Adrenal gland (tissue), 19 donors: ENCODE measurements at regions of chr5 and their contacts with region 1.

Region 1: GRCh38 chr5:38193015-38193581 is 65.3 kb upstream of the EGFLAM start:
- DNase-seq: peak; percentile 60 to 91 (median 74)
- H3K4me3 ChIP-seq: no peak overlapping the region
- H3K27ac ChIP-seq: no peak overlapping the region
- H3K4me1 ChIP-seq: no peaks in the 10 kb centered on the region
- H3K27me3 ChIP-seq: no peaks in the 10 kb centered on the region
- CTCF ChIP-seq: peak; percentile 84 to 93 (median 89)
- POLR2A ChIP-seq: no peak

Region 2: GRCh38 chr5:37412515-37413277 is 780.4 kb before region 1 on chr5:
- intact Hi-C with region 1: loop called in 1 of 2 experiments (anchors 5 kb)
- DNase-seq: peak; percentile 47 to 87 (median 67)
- H3K4me3 ChIP-seq: no peak overlapping the region
- H3K27ac ChIP-seq: no peak overlapping the region
- H3K4me1 ChIP-seq: no peaks in the 10 kb centered on the region
- H3K27me3 ChIP-seq: no peaks in the 10 kb centered on the region
- CTCF ChIP-seq: peak; percentile 71 to 97 (median 90)
- POLR2A ChIP-seq: no peak

Region 3: DNA sequence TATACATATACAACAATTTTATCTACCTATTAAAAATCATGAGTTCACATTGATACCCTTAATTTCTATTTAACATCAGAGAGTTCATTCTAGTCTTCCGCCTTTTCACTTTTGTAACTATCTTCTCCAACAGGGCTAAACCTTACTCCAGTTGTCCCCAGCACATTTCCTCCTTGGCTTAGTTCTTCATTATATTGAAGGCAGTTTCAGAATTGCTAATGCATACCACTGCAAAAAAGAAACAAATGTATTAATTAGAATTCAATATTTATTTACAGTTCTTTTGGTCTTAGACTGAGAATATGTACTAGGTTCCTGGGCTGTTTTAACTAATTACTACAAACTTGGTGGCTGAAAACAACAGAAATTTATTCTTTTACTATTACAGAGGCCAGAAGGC is 681.5 kb before region 1 on chr5:
- intact Hi-C with region 1: loop called in 1 of 2 experiments (anchors 5 kb)
- DNase-seq: no peak
- H3K4me3 ChIP-seq: no peak overlapping the region
- H3K27ac ChIP-seq: no peak overlapping the region
- H3K4me1 ChIP-seq: no peaks in the 10 kb centered on the region
- H3K27me3 ChIP-seq: no peaks in the 10 kb centered on the region
- CTCF ChIP-seq: no peak
- POLR2A ChIP-seq: no peak

Region 4: GRCh38 chr5:37837414-37838032 is 355.6 kb before region 1 on chr5:
- intact Hi-C with region 1: loop called (anchors 1 to 5 kb)
- DNase-seq: peak; percentile 59 to 83 (median 74)
- H3K4me3 ChIP-seq: peak overlapping the region in 2 of 4 donors; percentile 16 to 44
- H3K27ac ChIP-seq: no peak overlapping the region
- H3K4me1 ChIP-seq: peaks cover 17 to 40% of the 10 kb centered on the region in 2 donors
- H3K27me3 ChIP-seq: peaks cover 75% of the 10 kb centered on the region
- CTCF ChIP-seq: peak; percentile 64 to 84 (median 76)
- POLR2A ChIP-seq: no peak

Region 5: GRCh38 chr5:38023799-38024198 is 169.3 kb before region 1 on chr5:
- intact Hi-C with region 1: loop called in 1 of 2 experiments (anchors 10 kb)
- DNase-seq: no peak
- H3K4me3 ChIP-seq: no peak overlapping the region
- H3K27ac ChIP-seq: no peak overlapping the region
- H3K4me1 ChIP-seq: no peaks in the 10 kb centered on the region
- H3K27me3 ChIP-seq: peaks cover 8% of the 10 kb centered on the region
- CTCF ChIP-seq: peak; percentile 26 to 45 (median 38)
- POLR2A ChIP-seq: no peak

Region 6: DNA sequence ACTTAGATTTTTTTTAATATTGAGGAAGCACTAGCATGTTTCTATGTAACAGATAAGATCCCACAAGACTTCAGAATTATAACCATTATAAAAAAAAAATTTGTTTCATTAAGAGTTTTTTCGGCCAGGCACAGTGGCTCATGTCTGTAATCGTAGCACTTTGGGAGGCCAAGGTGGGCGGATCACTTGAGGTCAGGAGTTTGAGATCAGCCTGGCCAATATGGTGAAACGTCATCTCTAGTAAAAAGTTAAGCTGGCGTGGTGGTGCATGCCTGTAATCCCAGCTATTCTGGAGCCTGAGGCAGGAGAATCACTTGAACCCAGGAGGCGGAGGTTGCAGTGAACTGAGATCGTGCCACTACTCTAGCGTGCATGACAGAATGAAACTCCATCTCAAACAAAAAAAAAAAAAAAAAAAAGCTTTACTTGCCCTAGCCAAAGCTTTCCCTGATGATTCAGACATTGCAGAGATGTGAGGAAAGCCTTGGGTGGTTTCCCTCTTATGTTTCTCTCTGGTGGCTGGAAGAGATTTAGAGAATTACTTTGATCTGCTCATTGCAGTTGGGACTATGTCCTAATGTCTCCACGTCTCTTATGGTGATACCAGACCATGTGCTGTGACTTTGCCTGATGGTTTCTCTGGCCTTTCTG is 130.7 kb after region 1 on chr5:
- intact Hi-C with region 1: no loop called
- DNase-seq: peak in 1 of 7 donors; percentile 17
- H3K4me3 ChIP-seq: no peak overlapping the region
- H3K27ac ChIP-seq: no peak overlapping the region
- H3K4me1 ChIP-seq: no peaks in the 10 kb centered on the region
- H3K27me3 ChIP-seq: no peaks in the 10 kb centered on the region
- CTCF ChIP-seq: no peak
- POLR2A ChIP-seq: no peak

Region 7: GRCh38 chr5:38569180-38569579 is 376.1 kb after region 1 on chr5:
- intact Hi-C with region 1: no loop called
- DNase-seq: no peak
- H3K4me3 ChIP-seq: no peak overlapping the region
- H3K27ac ChIP-seq: no peak overlapping the region
- H3K4me1 ChIP-seq: no peaks in the 10 kb centered on the region
- H3K27me3 ChIP-seq: no peaks in the 10 kb centered on the region
- CTCF ChIP-seq: no peak
- POLR2A ChIP-seq: no peak